Heart right ventricle (tissue), 16 donors: ENCODE measurements at regions of chr2 and their contacts with region 1.

Region 1: GRCh38 chr2:10919771-10920621 is 8.3 kb downstream of the KCNF1 start:
- DNase-seq: no peak
- ATAC-seq: no peak
- H3K4me3 ChIP-seq: no peak overlapping the region
- H3K27ac ChIP-seq: no peak overlapping the region
- H3K4me1 ChIP-seq: peaks cover 0 to 8% (median 5%) of the 10 kb centered on the region in 9 donors
- H3K27me3 ChIP-seq: peaks cover 0 to 42% (median 2%) of the 10 kb centered on the region in 7 donors
- CTCF ChIP-seq: no peak

Region 2: GRCh38 chr2:11103984-11104793 is 184.2 kb after region 1 on chr2:
- intact Hi-C with region 1: loop called in 1 of 10 experiments (anchors 10 kb)
- DNase-seq: no peak
- ATAC-seq: peak in 1 of 8 donors; percentile 14
- H3K4me3 ChIP-seq: no peak overlapping the region
- H3K27ac ChIP-seq: peak overlapping the region in 1 of 10 donors; percentile 26
- H3K4me1 ChIP-seq: no peaks in the 10 kb centered on the region
- H3K27me3 ChIP-seq: peaks cover 0 to 22% (median 0%) of the 10 kb centered on the region in 7 donors
- CTCF ChIP-seq: no peak